B cell (primary cell): ENCODE measurements at regions of chr11 and their contacts with region 1.

Region 1: DNA sequence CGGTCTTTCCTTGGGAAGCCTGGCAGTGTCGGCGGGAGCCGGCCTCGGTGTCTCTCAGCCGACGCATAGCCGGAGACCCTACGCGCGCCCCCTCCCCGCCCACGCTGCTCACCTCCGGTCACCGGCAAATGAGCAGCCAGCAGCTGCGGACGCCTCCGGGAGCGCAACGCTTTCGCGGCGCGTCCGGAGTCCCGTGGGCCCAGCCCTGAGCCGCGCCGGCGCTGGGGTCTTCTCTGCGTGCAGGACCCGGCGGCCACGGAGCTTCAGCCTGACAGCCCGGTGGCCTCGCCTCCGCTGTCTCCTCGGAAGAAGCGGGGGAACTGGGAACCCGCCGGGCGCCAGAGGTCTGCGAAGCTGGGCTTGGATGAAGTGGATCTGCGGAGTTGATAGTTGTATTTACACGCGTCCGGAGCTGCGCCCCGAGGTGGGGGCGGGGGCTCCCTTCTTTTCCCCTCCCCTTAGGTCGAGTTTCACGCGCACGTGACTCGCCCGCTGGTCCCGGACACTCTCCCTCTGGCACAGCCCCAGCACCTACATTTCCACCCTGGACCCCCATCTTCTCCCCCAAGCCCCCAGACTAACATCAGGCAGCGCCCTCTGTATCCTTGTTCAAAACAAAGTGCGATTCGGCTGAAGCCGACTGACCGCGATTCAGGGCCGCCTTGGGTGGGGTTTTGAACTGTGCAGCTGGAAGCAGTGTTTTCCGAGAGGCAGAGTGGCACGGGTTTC is at the start of gene SLC43A1:
- DNase-seq: peak; percentile 46
- ATAC-seq: peak; percentile 34
- H3K4me3 ChIP-seq: peak within 1 kb of the TSS; percentile 57 to 93 (median 81)
- H3K4me3 Mint-ChIP-seq: peak within 1 kb of the TSS; percentile 97
- H3K27ac ChIP-seq: peak within 1 kb of the TSS in 1 of 2 donors; percentile 34
- H3K27ac Mint-ChIP-seq: peak within 1 kb of the TSS; percentile 73
- H3K4me1 ChIP-seq: peaks cover 6 to 22% of the 10 kb centered on the region in 2 donors
- H3K4me1 Mint-ChIP-seq: peaks cover 30% of the 10 kb centered on the region
- H3K27me3 ChIP-seq: no peaks in the 10 kb centered on the region
- H3K27me3 Mint-ChIP-seq: no peaks in the 10 kb centered on the region
- CTCF ChIP-seq: no peak
- total RNA-seq, gene SLC43A1: 3.7 and 5.9 TPM in 2 replicates

Region 2: GRCh38 chr11:57303990-57304579 is 211.4 kb before region 1 on chr11:
- CTCF ChIA-PET with region 1: no interaction called
- POLR2A ChIA-PET with region 1: no interaction called
- intact Hi-C with region 1: no loop called
- DNase-seq: no peak
- ATAC-seq: no peak
- H3K4me3 ChIP-seq: no peak overlapping the region
- H3K4me3 Mint-ChIP-seq: no peak overlapping the region
- H3K27ac ChIP-seq: no peak overlapping the region
- H3K27ac Mint-ChIP-seq: no peak overlapping the region
- H3K4me1 ChIP-seq: no peaks in the 10 kb centered on the region
- H3K4me1 Mint-ChIP-seq: peaks cover 2% of the 10 kb centered on the region
- H3K27me3 ChIP-seq: no peaks in the 10 kb centered on the region
- H3K27me3 Mint-ChIP-seq: no peaks in the 10 kb centered on the region
- CTCF ChIP-seq: no peak

Region 3: GRCh38 chr11:57480409-57481137 is 34.9 kb before region 1 on chr11:
- CTCF ChIA-PET with region 1: interaction called, 6 read pairs
- POLR2A ChIA-PET with region 1: interaction called, 4 read pairs
- intact Hi-C with region 1: loop called (anchors 5 kb)
- DNase-seq: peak; percentile 52
- ATAC-seq: peak; percentile 22
- H3K4me3 ChIP-seq: no peak overlapping the region
- H3K4me3 Mint-ChIP-seq: peak overlapping the region; percentile 61
- H3K27ac ChIP-seq: no peak overlapping the region
- H3K27ac Mint-ChIP-seq: no peak overlapping the region
- H3K4me1 ChIP-seq: peaks cover 46 to 53% of the 10 kb centered on the region in 2 donors
- H3K4me1 Mint-ChIP-seq: peaks cover 60% of the 10 kb centered on the region
- H3K27me3 ChIP-seq: peaks cover 0 to 22% (median 9%) of the 10 kb centered on the region in 4 experiments
- H3K27me3 Mint-ChIP-seq: peaks cover 5% of the 10 kb centered on the region
- CTCF ChIP-seq: peak; percentile 63

Region 4: DNA sequence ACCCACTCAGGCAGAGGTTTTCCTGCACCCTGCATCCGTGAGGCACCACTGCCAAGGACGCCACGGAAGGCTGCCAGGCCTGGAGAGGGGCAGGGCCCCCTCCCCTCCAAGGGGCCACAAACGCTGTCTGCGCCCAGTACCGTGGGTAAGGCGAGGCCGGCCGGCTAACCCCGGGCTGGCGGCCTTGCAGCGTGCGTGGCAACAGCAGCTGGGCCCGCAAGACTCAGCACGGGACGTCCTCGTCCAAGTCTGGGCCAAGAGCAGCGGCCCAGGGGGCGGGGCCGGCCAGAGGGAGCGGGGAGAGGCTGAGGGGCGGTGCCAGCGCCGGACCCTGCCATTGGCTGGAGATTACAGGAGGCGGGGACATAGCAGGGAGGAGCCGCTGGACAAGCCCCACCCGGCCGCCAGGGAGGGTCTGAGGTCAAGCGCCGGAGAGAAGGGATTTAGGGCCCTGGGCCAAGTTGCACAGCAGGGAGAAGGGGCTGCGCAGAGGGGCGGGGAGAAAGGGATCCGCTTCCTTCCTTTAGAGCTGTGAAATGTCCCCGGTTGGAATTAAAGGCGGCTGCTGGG is 16.0 kb before region 1 on chr11:
- CTCF ChIA-PET with region 1: interaction called, 47 read pairs
- POLR2A ChIA-PET with region 1: no interaction called
- intact Hi-C with region 1: loop called (anchors 2 kb)
- DNase-seq: peak; percentile 60
- ATAC-seq: peak; percentile 100
- H3K4me3 ChIP-seq: peak overlapping the region in 2 of 5 experiments; percentile 12 to 57
- H3K4me3 Mint-ChIP-seq: peak overlapping the region; percentile 38
- H3K27ac ChIP-seq: no peak overlapping the region
- H3K27ac Mint-ChIP-seq: no peak overlapping the region
- H3K4me1 ChIP-seq: peaks cover 0 to 6% of the 10 kb centered on the region in 2 donors
- H3K4me1 Mint-ChIP-seq: peaks cover 6% of the 10 kb centered on the region
- H3K27me3 ChIP-seq: no peaks in the 10 kb centered on the region
- H3K27me3 Mint-ChIP-seq: no peaks in the 10 kb centered on the region
- CTCF ChIP-seq: no peak